ENCODE measurements at regions of chr1 and their contacts with region 1.

Region 1: DNA sequence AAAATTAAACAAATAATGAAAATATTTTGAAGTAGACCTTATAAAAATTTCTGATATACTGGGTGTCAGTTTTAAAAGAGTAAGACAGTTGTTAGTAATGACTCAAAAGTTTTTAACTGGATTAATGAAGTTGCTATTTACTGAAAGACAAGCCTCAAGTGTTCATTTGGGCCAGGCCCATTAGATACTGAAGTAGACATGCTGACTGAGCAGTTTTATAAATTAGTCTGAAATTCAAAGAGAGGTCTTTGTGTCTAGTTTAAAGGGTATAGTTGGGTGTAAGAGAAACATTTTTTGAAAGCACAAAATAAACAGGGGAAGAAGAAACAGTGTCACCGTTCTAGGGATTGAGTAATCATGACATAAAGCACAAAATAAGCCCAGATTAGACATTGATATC is 1577.2 kb downstream of the AMY1C start:
- DNase-seq: no peak
- H3K4me3 ChIP-seq: no peak overlapping the region
- CTCF ChIP-seq: no peak
- POLR2A ChIP-seq: no peak

Region 2: DNA sequence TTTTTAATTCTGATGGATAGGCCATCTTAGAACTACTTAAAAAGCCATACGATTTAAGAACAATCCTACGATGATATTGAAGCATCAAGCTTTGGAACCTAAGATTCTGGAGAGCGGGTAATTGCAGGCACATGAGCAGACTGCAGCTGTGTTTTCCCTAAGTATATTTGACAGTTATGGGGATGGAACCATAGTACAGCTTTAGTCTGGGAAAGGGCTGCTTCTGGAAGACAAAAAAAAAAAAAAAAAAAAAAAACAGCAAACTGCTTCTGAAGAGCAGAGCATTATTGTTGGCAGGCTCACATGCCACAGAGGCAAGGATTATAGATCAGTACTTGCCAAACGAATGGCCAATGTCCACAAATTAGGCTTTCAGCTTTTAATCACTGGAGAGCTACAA is 41.6 kb after region 1 on chr1:
- intact Hi-C with region 1: loop called (anchors 1 kb)
- DNase-seq: no peak
- H3K4me3 ChIP-seq: no peak overlapping the region
- CTCF ChIP-seq: no peak
- POLR2A ChIP-seq: no peak

Region 3: DNA sequence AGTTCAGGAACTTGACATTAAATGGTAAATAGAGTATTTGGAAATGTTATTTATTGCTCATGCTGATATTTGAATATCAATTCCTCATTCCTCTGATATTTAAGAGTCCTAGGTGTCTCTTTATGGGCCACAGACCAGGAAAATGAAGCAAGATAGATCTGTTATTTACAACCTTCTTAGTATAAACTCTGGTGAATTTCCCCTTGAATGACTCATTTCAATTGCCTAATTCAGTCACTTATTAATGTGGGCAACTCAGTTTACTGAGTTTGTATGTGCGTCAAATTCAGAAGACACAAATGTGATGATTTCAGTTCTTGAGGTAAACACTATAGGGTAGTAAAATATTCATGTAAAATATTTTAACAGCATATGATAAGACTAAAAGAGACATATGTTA is 325.2 kb after region 1 on chr1:
- intact Hi-C with region 1: no loop called
- DNase-seq: no peak
- H3K4me3 ChIP-seq: no peak overlapping the region
- CTCF ChIP-seq: no peak
- POLR2A ChIP-seq: no peak